ENCODE measurements at regions of chr15 and their contacts with region 1.

Region 1: DNA sequence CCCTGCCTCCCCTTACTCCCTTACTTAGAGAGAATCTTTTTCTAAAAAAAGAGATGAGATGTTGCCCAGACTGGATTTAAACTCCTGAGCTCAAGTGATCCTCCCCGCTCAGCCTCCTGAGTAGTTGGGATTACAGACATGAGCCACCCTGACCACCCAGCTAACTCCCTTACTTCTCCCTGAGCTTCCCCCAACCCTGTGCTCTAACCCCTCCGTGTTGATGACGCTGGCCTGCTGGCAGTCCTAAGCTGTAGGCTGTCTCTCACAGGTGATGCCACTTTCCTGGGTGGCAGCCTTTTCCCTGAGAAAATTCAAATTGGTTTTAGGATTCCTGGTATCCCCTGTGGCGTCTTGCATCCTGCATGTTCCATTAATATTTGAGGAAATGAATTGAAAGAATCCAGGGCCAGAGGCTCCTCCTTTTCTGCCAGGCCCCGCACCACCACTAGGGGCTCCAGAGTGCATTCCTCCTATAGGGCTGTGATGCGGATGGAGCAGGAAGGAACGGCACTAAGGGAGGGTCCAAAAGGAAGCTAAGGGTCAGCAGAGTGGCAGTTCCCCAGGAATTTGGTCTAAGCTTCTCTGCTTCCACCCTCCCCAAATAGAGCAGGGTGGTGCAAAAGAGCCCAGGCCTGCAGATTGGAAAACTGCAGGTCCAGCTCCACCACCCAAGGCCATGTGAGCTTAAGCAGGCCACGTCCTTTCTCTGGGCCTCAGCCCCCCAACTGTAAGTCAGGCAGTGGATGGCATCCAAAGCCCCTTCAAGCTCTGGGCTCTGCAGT is 101.1 kb downstream of the DAPK2 start:
- DNase-seq: peak; percentile 38 to 79
- H3K4me3 ChIP-seq: no peak overlapping the region; the same call in 1 of the 2 replicates
- H3K27ac ChIP-seq: peak overlapping the region; percentile 68
- H3K4me1 ChIP-seq: peaks cover 12% of the 10 kb centered on the region
- H3K27me3 ChIP-seq: no peaks in the 10 kb centered on the region
- CTCF ChIP-seq: peak; percentile 89

Region 2: GRCh38 chr15:63166219-63166618 is 779.0 kb before region 1 on chr15:
- CTCF ChIA-PET with region 1: interaction called, 12 read pairs
- POLR2A ChIA-PET with region 1: no interaction called
- intact Hi-C with region 1: no loop called
- DNase-seq: no peak
- H3K4me3 ChIP-seq: no peak overlapping the region
- H3K27ac ChIP-seq: no peak overlapping the region
- H3K4me1 ChIP-seq: no peaks in the 10 kb centered on the region
- H3K27me3 ChIP-seq: no peaks in the 10 kb centered on the region
- CTCF ChIP-seq: no peak; the same call in 1 of the 2 replicates

Region 3: GRCh38 chr15:63752075-63752684 is 193.0 kb before region 1 on chr15:
- CTCF ChIA-PET with region 1: interaction called, 6 read pairs
- POLR2A ChIA-PET with region 1: no interaction called
- intact Hi-C with region 1: loop called (anchors 5 kb)
- DNase-seq: peak in 1 of 2 experiments; percentile 11
- H3K4me3 ChIP-seq: no peak overlapping the region
- H3K27ac ChIP-seq: no peak overlapping the region
- H3K4me1 ChIP-seq: no peaks in the 10 kb centered on the region
- H3K27me3 ChIP-seq: no peaks in the 10 kb centered on the region
- CTCF ChIP-seq: peak; percentile 73

Region 4: GRCh38 chr15:63805993-63806980 is 138.9 kb before region 1 on chr15:
- CTCF ChIA-PET with region 1: no interaction called
- POLR2A ChIA-PET with region 1: no interaction called
- intact Hi-C with region 1: no loop called
- DNase-seq: no peak
- H3K4me3 ChIP-seq: no peak overlapping the region
- H3K27ac ChIP-seq: no peak overlapping the region
- H3K4me1 ChIP-seq: no peaks in the 10 kb centered on the region
- H3K27me3 ChIP-seq: no peaks in the 10 kb centered on the region
- CTCF ChIP-seq: no peak

Region 5: DNA sequence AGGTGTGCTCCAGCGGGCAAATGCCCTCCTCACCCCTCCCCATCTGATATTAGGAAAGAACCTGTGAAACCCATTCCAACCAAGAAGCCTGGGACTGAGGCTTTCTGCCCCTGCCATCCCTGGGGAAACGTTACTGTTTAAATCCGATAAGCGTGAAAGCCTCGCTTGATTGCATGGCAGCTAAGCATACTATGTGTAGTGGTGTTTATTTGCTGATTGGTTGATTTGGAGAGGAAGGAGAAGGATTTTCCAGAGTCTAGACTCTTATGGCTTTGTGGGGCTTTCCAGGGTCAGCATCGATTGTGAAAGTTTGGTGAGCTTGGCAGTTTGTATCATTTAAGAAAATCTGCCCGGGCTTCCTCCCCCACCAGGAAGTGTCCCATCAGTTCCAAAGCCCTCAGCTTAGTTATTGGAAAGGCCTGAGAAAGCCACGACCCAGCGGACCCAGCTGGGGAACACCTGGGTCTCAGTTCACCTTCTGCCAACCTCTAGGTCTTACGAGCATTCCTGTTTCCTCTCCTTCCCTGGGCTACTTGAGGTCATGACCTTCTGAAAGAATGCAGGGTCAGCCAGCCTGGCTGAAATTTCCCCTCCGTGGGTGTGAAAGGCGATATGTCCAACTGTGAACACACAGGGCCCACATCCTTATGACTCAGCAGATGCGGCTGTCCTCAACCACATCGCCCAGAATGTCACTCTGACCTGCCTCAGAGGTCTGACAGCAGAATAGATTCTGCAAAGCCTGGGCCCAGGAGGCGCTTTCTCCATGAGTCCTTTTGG is 48.7 kb before region 1 on chr15:
- CTCF ChIA-PET with region 1: interaction called, 3 read pairs
- POLR2A ChIA-PET with region 1: no interaction called
- intact Hi-C with region 1: loop called (anchors 1 kb)
- DNase-seq: peak; percentile 75 to 76
- H3K4me3 ChIP-seq: no peak overlapping the region
- H3K27ac ChIP-seq: peak overlapping the region; percentile 58
- H3K4me1 ChIP-seq: peaks cover 25% of the 10 kb centered on the region
- H3K27me3 ChIP-seq: no peaks in the 10 kb centered on the region
- CTCF ChIP-seq: no peak

Region 6: DNA sequence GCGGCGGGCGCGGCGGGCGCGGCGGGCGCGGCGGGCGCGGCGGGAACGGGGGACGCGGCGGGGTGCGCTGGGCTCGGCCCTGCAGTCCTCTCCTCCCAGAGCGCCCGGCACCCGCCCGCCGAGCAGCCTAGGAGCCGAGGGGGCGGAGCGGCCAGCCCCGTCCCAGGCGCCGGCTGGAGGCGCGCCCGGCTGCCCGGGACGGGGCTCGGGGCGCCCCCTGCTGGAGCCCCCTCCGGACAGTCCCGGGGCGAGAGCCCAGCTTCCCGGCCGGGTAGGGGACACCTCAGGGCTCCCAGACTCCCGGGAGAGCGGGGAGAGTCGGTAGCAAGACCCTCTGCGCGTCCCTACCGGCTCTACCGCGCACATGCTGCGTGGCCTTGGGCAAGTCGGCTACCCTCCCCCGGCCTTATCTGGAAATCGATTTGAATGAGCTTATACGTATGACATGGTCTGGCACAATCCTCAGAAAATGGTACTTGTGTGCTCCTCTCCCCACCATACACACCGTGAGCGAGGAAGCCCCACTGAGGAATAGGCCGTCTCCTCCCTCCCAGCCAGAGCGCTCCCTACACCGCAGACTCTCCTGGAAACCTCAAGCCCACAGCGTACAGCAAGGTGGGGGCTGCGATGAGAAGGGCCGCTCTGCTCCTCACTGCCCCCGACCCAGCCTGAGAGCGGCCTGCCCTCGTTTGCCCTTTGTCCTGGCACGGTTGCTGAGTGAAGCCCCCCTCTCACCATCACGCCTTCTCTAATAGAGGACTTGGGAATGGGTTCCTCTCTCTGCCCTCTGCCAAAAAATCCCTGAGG is 101.4 kb after region 1 on chr15 and contains the start of gene DAPK2:
- CTCF ChIA-PET with region 1: interaction called, 46 read pairs
- POLR2A ChIA-PET with region 1: interaction called, 4 read pairs
- intact Hi-C with region 1: loop called (anchors 1 kb)
- DNase-seq: peak; percentile 40 to 83
- H3K4me3 ChIP-seq: peak within 1 kb of the TSS; percentile 51; the same call in 1 of the 2 replicates
- H3K27ac ChIP-seq: no peak within 1 kb of the TSS
- H3K4me1 ChIP-seq: peaks cover 7% of the 10 kb centered on the region; the same call in 1 of the 2 replicates
- H3K27me3 ChIP-seq: no peaks in the 10 kb centered on the region
- CTCF ChIP-seq: peak; percentile 65
- total RNA-seq, gene DAPK2: 11.0 and 19.6 TPM in 2 replicates

Region 7: DNA sequence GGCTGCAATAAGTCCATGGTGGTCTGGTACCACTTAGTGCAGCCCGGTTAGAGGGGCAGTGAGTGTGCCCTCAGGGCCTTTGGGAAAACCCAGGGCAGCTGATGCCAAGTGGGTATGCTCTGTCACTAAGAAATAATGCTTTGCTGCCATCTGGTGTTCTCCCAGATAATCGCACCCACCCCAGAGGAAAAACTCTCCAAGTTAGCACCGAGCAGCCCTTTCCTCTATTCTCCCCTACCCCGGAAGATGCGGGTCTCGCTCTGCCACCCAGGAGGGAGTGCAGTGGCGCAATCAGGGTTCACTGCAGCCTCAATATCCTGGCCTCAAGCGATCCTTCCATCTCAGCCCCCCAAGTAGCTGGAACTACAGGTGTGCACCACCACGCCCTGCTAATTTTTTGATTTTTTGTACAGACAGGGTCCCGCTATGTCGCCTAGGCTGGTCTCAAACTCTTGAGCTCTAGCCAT is 122.4 kb after region 1 on chr15:
- CTCF ChIA-PET with region 1: interaction called, 3 read pairs
- POLR2A ChIA-PET with region 1: no interaction called
- intact Hi-C with region 1: loop called (anchors 1 kb)
- DNase-seq: peak in 1 of 2 experiments; percentile 59
- H3K4me3 ChIP-seq: no peak overlapping the region
- H3K27ac ChIP-seq: no peak overlapping the region
- H3K4me1 ChIP-seq: no peaks in the 10 kb centered on the region
- H3K27me3 ChIP-seq: no peaks in the 10 kb centered on the region
- CTCF ChIP-seq: peak; percentile 80

Region 8: GRCh38 chr15:64105113-64105704 is 160.0 kb after region 1 on chr15:
- CTCF ChIA-PET with region 1: no interaction called
- POLR2A ChIA-PET with region 1: no interaction called
- intact Hi-C with region 1: no loop called
- DNase-seq: no peak
- H3K4me3 ChIP-seq: no peak overlapping the region
- H3K27ac ChIP-seq: no peak overlapping the region
- H3K4me1 ChIP-seq: no peaks in the 10 kb centered on the region
- H3K27me3 ChIP-seq: no peaks in the 10 kb centered on the region
- CTCF ChIP-seq: no peak

Measured in PC-9 (cell line).